GM12878 (cell line): ENCODE measurements at regions of chr17 and their contacts with region 1.

Region 1: DNA sequence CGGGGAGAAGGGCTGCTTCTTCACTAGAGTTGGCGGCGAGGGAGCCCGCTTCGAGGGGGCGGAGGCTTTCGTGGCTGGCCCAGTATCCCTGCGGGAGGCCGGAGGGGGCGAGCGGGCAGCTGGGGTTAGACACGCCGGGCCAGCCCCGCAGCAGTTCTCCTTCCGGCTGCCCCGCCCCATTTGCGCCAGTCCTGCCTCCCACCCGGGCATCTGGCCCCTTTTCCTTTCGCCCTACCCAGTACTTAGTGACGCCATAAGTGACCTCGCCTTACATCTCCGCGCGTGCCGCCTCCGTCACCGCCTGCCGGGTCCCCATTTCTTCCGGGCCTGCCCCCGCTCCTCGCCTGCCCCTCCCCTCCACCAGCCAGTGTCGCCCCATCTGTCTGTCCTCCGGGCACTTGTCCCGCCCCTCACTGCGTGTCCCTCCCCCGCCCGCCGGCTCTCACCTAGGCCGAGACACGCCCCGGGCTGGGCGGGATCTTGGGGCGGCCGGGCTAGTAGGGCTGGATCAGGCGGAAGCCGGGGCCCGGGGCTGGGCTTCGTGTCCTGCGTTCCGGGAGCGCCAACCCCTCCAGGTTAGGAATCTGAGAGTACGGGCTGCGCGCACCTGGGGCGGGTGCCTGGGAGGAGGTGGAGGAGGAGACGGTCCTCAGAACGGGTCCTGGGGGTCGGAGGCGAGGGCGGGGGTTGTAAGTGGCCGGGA is 14.3 kb downstream of the SPATA32 start:
- DNase-seq: peak; percentile 78
- ATAC-seq: peak; percentile 95
- H3K4me3 ChIP-seq: peak overlapping the region; percentile 89
- H3K27ac ChIP-seq: peak overlapping the region; percentile 98
- H3K4me1 ChIP-seq: peaks cover 14% of the 10 kb centered on the region
- H3K27me3 ChIP-seq: no peaks in the 10 kb centered on the region
- CTCF ChIP-seq: no peak
- EP300 ChIP-seq: no peak; a peak in 1 of 4 replicates
- POLR2A ChIP-seq: peak; percentile 91
- RAD21 ChIP-seq: no peak

Region 2: DNA sequence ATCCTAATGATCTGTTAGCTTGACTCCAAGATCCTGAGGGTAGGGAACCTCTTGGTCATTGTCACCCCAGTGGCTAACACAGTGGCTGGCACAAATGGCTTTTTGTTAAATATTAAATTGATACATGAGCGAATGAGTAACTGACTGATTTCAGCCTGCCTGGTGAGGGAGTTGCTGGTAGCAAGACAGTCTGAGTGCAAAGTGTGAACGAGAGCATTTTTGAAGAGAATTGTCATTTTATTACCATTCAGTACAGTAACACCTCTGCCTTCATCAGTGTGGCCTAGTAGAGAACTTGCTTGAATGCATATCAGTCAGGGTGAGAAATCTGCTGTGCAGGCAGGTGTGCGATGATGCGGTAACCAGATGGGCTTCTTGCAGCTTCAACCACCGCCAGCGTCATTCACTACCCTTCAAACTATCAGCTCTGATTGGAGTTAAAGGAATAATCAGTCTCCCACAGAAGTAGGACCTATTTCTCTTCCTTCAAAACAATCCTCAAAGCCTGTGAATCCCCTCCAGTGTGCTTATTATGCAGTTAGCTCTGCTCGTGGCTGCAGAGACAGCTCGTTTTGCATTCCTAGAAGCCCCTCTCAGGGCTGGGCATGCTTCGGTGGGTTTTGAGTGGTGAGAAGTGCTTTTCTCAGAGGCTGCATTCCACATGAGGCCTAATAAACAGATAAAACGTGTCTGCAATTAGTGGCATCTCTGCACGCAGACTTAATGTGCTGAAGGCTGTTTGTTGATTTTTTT is 56.9 kb before region 1 on chr17:
- CTCF ChIA-PET with region 1: no interaction called
- POLR2A ChIA-PET with region 1: no interaction called
- RAD21 ChIA-PET with region 1: no interaction called
- SMC1A ChIA-PET with region 1: no interaction called
- in situ Hi-C with region 1: no loop called
- intact Hi-C with region 1: no loop called
- DNase-seq: no peak
- ATAC-seq: peak; percentile 50
- H3K4me3 ChIP-seq: no peak overlapping the region
- H3K27ac ChIP-seq: no peak overlapping the region
- H3K4me1 ChIP-seq: no peaks in the 10 kb centered on the region
- H3K27me3 ChIP-seq: no peaks in the 10 kb centered on the region
- CTCF ChIP-seq: no peak
- EP300 ChIP-seq: no peak
- POLR2A ChIP-seq: no peak
- RAD21 ChIP-seq: no peak

Region 3: GRCh38 chr17:45235416-45236281 is 11.9 kb before region 1 on chr17:
- CTCF ChIA-PET with region 1: interaction called, 20 read pairs
- POLR2A ChIA-PET with region 1: no interaction called
- RAD21 ChIA-PET with region 1: interaction called, 3 read pairs
- SMC1A ChIA-PET with region 1: interaction called, 5 read pairs
- in situ Hi-C with region 1: no loop called
- intact Hi-C with region 1: no loop called
- DNase-seq: no peak
- ATAC-seq: peak; percentile 85
- H3K4me3 ChIP-seq: no peak overlapping the region
- H3K27ac ChIP-seq: no peak overlapping the region
- H3K4me1 ChIP-seq: peaks cover 2% of the 10 kb centered on the region
- H3K27me3 ChIP-seq: no peaks in the 10 kb centered on the region
- CTCF ChIP-seq: peak; percentile 78 to 84 (median 82)
- EP300 ChIP-seq: no peak
- POLR2A ChIP-seq: no peak
- RAD21 ChIP-seq: peak; percentile 69